SK-N-SH (cell line): ENCODE measurements at regions of chr16 and their contacts with region 1.

Region 1: DNA sequence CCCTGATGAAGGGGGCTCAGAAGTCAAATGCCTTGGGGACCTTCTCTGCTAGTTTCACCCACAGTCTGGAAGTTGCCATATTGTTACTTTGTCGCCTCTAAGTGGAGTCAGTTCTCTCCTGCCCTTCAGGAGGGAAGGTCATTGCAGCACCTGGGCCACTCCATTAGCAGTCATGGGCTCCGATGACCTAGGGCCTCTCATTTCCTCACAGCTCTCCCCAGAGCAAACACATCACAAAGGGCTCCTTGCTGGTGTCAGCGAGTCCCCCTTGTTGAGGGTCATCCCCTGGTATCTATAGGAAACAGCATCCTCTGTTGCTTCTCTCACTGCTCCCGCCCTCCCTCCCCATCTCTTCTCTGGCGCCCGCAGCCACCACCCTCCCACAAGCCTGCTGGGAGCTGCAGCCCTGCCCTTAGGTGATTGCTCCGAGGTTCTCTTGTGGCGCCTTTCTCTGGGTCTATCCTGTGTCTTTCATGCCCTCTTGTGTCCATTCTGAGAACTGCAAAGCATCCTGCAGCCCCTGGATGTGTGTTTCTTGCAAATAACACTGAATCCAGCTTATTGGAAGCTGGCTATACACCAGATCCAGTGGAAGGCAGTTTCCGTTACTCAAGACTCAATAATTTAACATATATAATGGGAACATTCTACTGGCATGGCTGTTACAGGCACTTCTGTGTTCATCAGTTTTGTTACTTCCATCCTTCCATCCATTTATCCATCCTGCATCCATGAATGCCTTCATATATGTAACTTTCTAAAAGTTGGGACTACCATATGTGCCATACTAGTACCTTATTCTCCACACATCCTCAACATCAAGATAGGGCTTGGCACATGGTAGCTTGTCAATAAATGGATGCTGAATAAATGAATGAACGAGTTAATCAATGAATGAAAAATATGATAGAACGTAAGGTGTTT is 21.2 kb downstream of the PDILT start:
- DNase-seq: peak; percentile 65
- H3K4me3 ChIP-seq: no peak overlapping the region; a peak in 1 of 4 replicates
- H3K27ac ChIP-seq: no peak overlapping the region
- H3K4me1 ChIP-seq: no peaks in the 10 kb centered on the region; a peak in 1 of 4 replicates
- H3K27me3 ChIP-seq: no peaks in the 10 kb centered on the region
- CTCF ChIP-seq: peak; percentile 79
- EP300 ChIP-seq: no peak
- RAD21 ChIP-seq: peak; percentile 72

Region 2: DNA sequence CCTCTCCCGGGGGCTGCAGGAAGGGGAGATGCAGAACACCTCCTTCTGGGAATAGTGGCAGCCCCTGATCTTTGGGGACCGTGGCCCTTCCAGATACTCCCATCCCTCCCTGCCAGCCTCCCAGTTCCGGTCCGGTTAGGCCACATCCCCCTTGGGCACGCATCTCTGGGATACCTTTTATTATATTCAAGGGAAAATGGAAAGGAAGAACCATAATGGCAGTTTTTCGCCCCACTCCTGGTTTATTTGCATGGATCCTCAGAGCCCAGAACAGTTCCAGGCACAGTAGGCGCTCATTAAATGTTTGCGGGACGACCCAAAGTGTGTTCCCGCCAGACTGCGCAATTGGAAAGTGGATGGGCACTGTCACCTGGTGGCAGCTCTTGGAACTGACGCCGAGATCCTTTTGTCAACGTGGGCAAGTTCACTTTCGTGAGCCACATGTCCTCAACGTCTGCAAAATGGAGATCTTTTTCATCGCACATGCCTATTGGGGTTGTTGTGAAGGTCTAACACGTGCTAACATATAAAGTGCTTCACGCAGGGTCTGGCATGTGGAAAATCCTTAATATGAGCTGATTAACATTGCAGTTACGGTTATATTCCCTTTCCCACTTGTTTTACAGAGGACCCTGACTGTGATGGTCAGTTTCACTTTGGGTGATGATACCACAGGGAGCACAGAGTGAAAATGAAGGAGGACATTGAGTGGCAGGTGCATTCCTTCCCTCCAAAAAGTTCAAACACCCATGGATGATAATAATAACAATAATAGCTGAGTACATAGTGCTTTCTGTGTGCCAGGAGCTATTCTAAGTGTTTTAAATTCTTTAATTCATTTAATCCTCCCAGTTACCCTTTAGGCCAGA is 497.1 kb before region 1 on chr16:
- CTCF ChIA-PET with region 1: interaction called, 17 read pairs
- POLR2A ChIA-PET with region 1: no interaction called
- DNase-seq: peak; percentile 70
- H3K4me3 ChIP-seq: peak overlapping the region in 1 of 2 experiments; percentile 39; a peak in 2 of 4 replicates
- H3K27ac ChIP-seq: no peak overlapping the region
- H3K4me1 ChIP-seq: peaks cover 0 to 3% of the 10 kb centered on the region in 2 experiments; a peak in 1 of 4 replicates
- H3K27me3 ChIP-seq: no peaks in the 10 kb centered on the region
- CTCF ChIP-seq: peak; percentile 99
- EP300 ChIP-seq: no peak
- RAD21 ChIP-seq: peak; percentile 98

Region 3: DNA sequence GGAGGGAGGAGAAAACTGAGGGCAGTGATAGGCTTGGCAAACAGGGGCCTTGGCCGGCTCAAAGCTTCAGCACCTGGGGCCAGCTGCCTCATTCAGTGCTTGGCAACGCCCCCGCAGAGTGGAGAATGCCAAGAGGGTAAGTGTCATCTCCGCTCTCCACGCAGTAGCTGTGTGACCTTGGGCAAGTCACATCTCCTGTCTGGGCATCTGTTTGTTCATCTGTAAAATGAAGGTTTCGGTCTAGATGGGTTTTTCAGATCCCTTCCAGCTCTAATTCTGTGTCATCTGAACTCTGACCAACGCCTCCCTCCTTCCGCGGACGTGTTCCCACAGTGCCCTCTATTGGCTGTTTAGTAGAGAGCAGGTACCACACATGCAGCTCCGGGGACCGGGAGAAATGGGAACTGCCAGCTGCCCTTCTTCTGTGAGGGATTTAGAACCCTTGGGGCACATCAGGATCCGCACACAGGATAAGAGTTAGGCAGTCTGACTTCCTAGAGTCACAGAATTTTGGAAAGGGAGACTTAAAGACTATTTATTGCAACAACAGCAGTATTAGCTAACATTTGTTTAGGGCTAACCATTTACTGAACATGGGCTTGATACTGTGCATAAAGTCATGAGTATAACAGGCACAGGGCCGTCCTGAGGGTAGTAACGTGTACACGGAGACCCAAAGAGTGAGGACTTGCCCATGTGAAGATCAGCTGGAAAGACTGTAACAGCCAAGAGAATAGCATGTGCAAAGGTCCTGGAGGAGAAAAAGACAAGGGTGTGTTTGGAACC is 82.9 kb before region 1 on chr16:
- CTCF ChIA-PET with region 1: interaction called, 65 read pairs
- POLR2A ChIA-PET with region 1: no interaction called
- DNase-seq: peak; percentile 67
- H3K4me3 ChIP-seq: peak overlapping the region in 1 of 2 experiments; percentile 12; a peak in 1 of 4 replicates
- H3K27ac ChIP-seq: no peak overlapping the region
- H3K4me1 ChIP-seq: no peaks in the 10 kb centered on the region; a peak in 1 of 4 replicates
- H3K27me3 ChIP-seq: no peaks in the 10 kb centered on the region
- CTCF ChIP-seq: peak; percentile 77
- EP300 ChIP-seq: no peak
- RAD21 ChIP-seq: peak; percentile 81

Region 4: GRCh38 chr16:20364051-20364450 is 19.3 kb before region 1 on chr16:
- CTCF ChIA-PET with region 1: interaction called, 18 read pairs
- POLR2A ChIA-PET with region 1: no interaction called
- DNase-seq: no peak
- H3K4me3 ChIP-seq: no peak overlapping the region
- H3K27ac ChIP-seq: no peak overlapping the region
- H3K4me1 ChIP-seq: no peaks in the 10 kb centered on the region
- H3K27me3 ChIP-seq: peaks cover 6% of the 10 kb centered on the region; the same call in 1 of the 2 replicates
- CTCF ChIP-seq: no peak
- EP300 ChIP-seq: no peak
- RAD21 ChIP-seq: no peak

Region 5: DNA sequence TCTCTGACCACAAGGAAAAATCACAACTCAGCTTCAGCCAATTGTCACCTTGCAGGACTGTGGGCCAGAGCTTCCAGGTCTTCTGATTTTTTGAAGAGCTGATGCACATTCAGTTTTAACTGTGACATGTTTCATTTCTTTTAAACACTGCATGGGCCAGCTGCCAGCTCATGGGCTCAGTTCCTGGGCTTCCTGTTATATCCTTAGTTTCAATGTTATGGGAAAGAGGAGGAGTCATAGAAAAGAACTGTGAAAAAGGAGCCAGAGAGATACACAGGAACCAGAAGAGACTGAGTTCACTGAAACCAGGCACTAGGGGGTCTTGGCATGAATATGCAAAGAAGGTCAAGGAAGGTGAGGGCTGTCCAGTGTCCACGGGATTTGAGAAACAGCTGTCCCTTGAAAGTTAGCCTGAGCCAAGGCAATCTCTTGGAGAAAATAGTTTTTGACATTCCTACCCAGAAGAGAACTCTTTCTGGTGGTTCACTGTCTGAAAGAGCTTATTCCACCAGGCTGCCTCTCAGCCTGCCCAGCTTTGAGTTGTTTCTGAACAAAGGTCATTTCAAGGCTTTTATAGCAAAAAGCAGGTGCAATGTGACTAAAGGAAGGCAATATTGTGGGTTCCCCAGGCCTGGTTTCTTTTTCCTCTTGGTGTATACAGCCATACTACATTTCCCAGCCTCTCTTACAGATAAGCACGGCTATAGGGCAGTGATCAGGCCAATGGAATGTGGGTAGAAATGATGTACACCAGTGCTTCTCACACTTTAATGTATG is 10.6 kb after region 1 on chr16:
- CTCF ChIA-PET with region 1: interaction called, 61 read pairs
- POLR2A ChIA-PET with region 1: no interaction called
- DNase-seq: no peak
- H3K4me3 ChIP-seq: no peak overlapping the region
- H3K27ac ChIP-seq: no peak overlapping the region
- H3K4me1 ChIP-seq: no peaks in the 10 kb centered on the region
- H3K27me3 ChIP-seq: no peaks in the 10 kb centered on the region
- CTCF ChIP-seq: no peak
- EP300 ChIP-seq: no peak
- RAD21 ChIP-seq: no peak

Region 6: DNA sequence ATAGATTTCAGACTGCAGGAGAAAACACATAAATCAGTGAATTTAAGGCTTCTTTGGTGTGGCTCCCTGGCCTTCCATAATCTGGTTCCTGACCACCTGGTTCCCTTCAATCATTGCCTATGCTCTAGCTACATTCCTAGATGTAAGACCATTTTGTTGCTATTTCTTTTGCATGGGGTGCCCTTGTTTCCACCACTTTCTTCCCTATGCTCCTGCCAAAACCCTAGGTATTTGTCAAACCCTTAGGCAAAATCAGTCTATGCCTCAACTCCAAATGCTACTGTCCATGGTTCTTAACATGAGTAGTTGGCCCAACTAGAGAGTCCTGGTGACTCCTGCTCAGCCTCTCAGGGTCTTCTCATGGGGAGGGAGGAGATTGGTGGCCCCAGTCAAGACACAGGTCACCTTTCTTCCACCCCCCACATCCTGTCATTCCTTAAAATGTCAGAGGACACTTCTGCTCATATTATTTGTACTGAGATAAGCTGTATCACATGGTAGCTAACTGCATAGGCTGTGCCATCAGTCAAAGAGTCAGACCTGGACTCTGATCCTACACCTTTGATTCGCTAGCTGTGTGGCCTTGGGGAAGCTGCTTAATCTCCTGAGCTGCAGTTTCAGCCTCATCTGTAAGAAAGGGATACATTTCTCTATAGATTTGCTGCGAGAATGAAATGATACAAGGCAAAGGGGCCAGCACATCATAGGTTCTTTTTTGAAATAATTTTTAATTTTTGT is 40.9 kb after region 1 on chr16:
- CTCF ChIA-PET with region 1: no interaction called
- POLR2A ChIA-PET with region 1: no interaction called
- DNase-seq: no peak
- H3K4me3 ChIP-seq: no peak overlapping the region
- H3K27ac ChIP-seq: no peak overlapping the region
- H3K4me1 ChIP-seq: no peaks in the 10 kb centered on the region
- H3K27me3 ChIP-seq: no peaks in the 10 kb centered on the region
- CTCF ChIP-seq: no peak
- EP300 ChIP-seq: no peak
- RAD21 ChIP-seq: no peak